ENCODE measurements at regions of chr13 and their contacts with region 1.

Region 1: GRCh38 chr13:26985285-26985878 is 186.2 kb downstream of the USP12 start:
- DNase-seq: peak; percentile 74
- H3K4me3 Mint-ChIP-seq: no peak overlapping the region
- H3K27ac Mint-ChIP-seq: no peak overlapping the region
- H3K4me1 Mint-ChIP-seq: peaks cover 14% of the 10 kb centered on the region
- H3K27me3 Mint-ChIP-seq: peaks cover 15% of the 10 kb centered on the region

Region 2: DNA sequence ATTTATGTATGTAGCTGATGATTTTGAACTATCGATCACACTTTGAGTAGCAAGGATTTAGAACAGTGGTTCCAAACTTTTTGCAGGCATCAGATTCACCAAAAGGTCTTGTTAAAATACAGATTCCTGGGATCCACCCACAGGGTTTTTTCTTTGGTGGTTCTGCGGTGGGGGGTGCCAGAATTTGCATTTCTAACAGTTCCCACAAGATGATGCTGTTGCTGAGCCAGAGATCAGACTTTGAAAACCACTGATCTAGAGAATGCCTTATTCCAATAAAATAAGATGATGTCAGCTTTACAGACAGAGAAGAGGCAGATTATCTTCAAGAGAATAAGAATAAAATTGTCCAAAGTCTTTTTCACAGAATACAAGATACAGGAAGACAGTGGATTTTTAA is 852.6 kb before region 1 on chr13:
- CTCF ChIA-PET with region 1: no interaction called
- POLR2A ChIA-PET with region 1: no interaction called
- DNase-seq: no peak
- H3K4me3 Mint-ChIP-seq: no peak overlapping the region
- H3K27ac Mint-ChIP-seq: no peak overlapping the region
- H3K4me1 Mint-ChIP-seq: no peaks in the 10 kb centered on the region
- H3K27me3 Mint-ChIP-seq: peaks cover 4% of the 10 kb centered on the region

Region 3: GRCh38 chr13:27022571-27023311 is 37.4 kb after region 1 on chr13:
- CTCF ChIA-PET with region 1: no interaction called
- POLR2A ChIA-PET with region 1: no interaction called
- DNase-seq: no peak
- H3K4me3 Mint-ChIP-seq: no peak overlapping the region
- H3K27ac Mint-ChIP-seq: no peak overlapping the region
- H3K4me1 Mint-ChIP-seq: peaks cover 19% of the 10 kb centered on the region
- H3K27me3 Mint-ChIP-seq: peaks cover 16% of the 10 kb centered on the region

Region 4: DNA sequence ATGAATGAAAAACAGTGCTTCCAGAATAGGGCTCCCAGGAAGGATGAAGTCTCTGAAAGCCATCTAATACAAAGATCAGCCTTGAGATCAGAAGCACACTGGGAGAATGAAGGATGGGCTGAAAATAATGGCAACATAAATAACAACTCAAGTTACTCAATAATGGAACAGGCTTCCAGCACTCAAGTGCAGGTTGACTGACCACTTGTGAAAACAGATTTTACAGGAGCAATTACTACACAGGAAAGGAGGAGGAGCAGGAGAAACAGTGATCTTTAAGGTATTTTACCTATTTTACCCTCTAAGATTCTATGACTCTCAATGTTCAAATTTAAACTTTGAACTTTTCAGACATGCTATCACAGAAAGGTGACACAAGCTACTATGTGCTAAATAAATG is 80.2 kb after region 1 on chr13:
- CTCF ChIA-PET with region 1: no interaction called
- POLR2A ChIA-PET with region 1: no interaction called
- DNase-seq: no peak
- H3K4me3 Mint-ChIP-seq: no peak overlapping the region
- H3K27ac Mint-ChIP-seq: no peak overlapping the region
- H3K4me1 Mint-ChIP-seq: no peaks in the 10 kb centered on the region
- H3K27me3 Mint-ChIP-seq: no peaks in the 10 kb centered on the region

Region 5: DNA sequence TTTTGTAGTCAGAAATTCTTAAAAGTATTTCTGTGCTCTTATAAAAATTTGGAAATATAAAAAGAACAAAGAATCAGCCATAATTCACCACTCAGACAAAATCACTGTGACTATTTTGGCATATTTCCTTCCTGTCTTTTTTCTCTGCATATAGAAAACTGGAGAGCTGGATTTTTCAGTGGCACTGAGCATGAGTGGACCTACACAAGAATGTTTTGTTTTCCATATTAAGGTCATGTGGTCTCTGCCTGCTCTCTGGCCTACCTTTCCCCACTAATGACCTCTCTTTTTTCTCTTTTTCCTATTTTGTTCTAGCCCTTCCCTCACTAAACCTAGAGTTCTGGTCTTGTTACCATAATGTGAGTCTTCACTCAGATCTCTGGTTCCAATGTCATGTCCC is 203.8 kb after region 1 on chr13:
- CTCF ChIA-PET with region 1: no interaction called
- POLR2A ChIA-PET with region 1: no interaction called
- DNase-seq: no peak
- H3K4me3 Mint-ChIP-seq: no peak overlapping the region
- H3K27ac Mint-ChIP-seq: no peak overlapping the region
- H3K4me1 Mint-ChIP-seq: peaks cover 8% of the 10 kb centered on the region
- H3K27me3 Mint-ChIP-seq: peaks cover 2% of the 10 kb centered on the region

Region 6: DNA sequence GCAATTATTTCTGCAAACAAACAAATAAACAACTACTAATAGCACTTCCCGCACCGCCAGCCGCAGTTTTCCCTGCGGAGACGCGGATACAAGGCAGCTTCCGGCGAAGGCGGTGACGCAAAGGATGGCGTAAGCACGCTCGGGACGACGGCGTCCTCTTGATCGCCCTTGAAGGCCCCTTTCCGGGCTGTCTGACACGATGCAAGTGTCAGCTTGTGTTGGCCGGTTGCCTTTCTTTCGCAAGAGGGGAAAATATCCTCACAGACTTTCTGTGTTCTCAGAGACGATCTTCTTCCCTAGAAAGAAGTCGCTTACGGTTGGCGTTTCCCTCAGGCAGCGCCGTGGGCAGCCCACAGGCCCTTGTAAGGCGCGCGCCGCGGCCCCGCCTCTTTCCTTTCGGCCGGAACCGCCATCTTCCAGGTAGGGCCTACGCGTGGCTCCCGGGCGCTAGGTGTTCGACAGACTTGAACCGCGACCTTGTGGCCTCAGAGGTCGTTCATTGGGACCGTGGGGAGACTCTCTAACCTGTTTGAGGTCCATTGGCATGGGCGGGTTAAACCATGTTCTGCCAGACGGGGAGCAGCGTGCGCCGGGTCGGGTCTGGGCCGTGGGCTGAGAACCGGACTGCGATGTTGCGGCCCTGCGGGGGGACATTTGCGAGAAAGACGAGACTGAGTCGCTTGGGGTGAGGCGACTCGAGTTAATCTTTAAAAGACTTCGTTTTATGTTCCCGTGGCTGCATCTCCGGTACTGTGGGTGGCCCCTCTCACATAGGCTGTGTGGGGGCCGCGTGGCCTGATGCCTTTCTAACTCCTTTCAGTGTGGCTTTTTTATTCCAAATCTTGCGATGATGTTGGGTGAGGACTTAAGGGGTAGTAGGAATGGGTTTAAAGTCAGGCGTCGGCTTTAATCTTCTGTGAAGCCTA is 266.0 kb after region 1 on chr13 and contains the start of gene RPL21:
- CTCF ChIA-PET with region 1: interaction called, 10 read pairs
- POLR2A ChIA-PET with region 1: interaction called, 4 read pairs
- DNase-seq: peak; percentile 90
- H3K4me3 Mint-ChIP-seq: peak within 1 kb of the TSS; percentile 96
- H3K27ac Mint-ChIP-seq: peak within 1 kb of the TSS; percentile 97
- H3K4me1 Mint-ChIP-seq: peaks cover 43% of the 10 kb centered on the region
- H3K27me3 Mint-ChIP-seq: no peaks in the 10 kb centered on the region
- total RNA-seq, gene RPL21: 742 to 774 TPM

Region 7: GRCh38 chr13:27283906-27284493 is 298.6 kb after region 1 on chr13:
- CTCF ChIA-PET with region 1: interaction called, 12 read pairs
- POLR2A ChIA-PET with region 1: no interaction called
- DNase-seq: peak; percentile 22
- H3K4me3 Mint-ChIP-seq: no peak overlapping the region
- H3K27ac Mint-ChIP-seq: no peak overlapping the region
- H3K4me1 Mint-ChIP-seq: peaks cover 4% of the 10 kb centered on the region
- H3K27me3 Mint-ChIP-seq: no peaks in the 10 kb centered on the region

Region 8: DNA sequence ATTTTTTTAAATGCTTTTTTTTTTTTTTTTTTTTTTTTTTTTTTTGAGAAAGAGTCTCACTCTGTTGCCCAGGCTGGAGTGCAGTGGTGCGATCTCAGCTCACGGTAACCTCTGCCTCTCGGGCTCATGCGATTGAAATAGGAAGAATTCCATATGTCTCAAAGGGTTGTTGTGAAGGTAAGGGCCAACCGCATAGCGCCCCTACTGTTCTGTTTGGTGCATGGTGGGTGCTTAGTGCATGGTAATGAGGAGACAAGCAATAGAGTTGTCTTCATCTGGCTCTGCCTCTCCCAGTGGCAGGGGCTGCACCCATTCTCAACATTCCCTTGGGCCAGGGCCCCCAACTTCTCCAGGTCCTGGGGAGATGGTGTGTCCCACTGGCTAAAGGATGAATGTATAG is 353.9 kb after region 1 on chr13:
- CTCF ChIA-PET with region 1: interaction called, 11 read pairs
- POLR2A ChIA-PET with region 1: no interaction called
- DNase-seq: peak; percentile 38
- H3K4me3 Mint-ChIP-seq: no peak overlapping the region
- H3K27ac Mint-ChIP-seq: no peak overlapping the region
- H3K4me1 Mint-ChIP-seq: no peaks in the 10 kb centered on the region
- H3K27me3 Mint-ChIP-seq: peaks cover 20% of the 10 kb centered on the region

Region 9: GRCh38 chr13:27353166-27353583 is 367.8 kb after region 1 on chr13:
- CTCF ChIA-PET with region 1: interaction called, 130 read pairs
- POLR2A ChIA-PET with region 1: interaction called, 3 read pairs
- DNase-seq: peak; percentile 56
- H3K4me3 Mint-ChIP-seq: peak overlapping the region; percentile 40
- H3K27ac Mint-ChIP-seq: peak overlapping the region; percentile 76
- H3K4me1 Mint-ChIP-seq: peaks cover 19% of the 10 kb centered on the region
- H3K27me3 Mint-ChIP-seq: peaks cover 14% of the 10 kb centered on the region

Region 10: DNA sequence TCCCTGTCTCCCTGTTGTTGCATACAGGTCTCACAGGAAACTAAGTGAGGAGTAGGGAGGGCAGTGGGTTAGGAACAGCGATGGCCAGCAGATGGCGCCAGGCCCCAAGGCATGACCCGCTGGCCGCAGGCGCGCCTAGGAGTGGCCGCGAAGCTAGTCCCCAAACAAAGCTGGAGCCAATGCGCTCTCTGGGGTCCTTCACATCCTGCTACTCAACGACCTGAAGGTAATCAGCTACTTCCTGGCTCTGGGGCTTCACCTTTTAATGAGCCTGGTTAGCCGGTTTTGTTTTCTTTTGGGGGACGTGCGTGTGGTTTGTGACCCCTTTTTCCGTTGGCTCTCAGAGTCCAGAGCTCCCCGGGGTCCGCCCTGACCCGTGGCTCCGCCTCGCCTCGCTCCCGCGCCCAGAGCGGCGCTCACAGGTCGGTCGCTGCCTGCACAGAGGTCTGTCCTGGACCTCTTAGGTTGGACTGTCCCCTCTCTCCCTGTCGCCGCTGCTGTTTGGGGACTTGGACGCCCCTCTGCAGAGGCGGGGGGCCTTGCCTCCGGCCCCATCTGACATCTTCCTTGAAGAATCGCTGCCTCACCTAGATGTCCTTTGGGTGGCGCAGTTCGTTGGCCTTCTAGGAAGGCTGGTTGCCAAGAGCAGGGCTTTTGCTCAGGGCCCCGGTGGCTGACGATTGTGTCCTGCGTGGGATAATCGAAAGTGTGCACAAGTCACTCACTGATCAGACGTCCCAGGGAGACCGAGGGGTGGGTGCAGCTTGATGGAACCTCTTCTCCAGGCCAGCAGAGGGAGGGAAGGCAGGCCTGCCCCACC is 376.9 kb after region 1 on chr13:
- CTCF ChIA-PET with region 1: interaction called, 130 read pairs
- POLR2A ChIA-PET with region 1: interaction called, 3 read pairs
- DNase-seq: peak; percentile 81
- H3K4me3 Mint-ChIP-seq: no peak overlapping the region
- H3K27ac Mint-ChIP-seq: no peak overlapping the region
- H3K4me1 Mint-ChIP-seq: peaks cover 5% of the 10 kb centered on the region
- H3K27me3 Mint-ChIP-seq: peaks cover 37% of the 10 kb centered on the region